Activated naive CD4-positive, alpha-beta T cell treated with anti-CD3 and anti-CD28 coated beads for 36 hours (primary cell): ENCODE measurements at regions of chr21 and their contacts with region 1.

Region 1: DNA sequence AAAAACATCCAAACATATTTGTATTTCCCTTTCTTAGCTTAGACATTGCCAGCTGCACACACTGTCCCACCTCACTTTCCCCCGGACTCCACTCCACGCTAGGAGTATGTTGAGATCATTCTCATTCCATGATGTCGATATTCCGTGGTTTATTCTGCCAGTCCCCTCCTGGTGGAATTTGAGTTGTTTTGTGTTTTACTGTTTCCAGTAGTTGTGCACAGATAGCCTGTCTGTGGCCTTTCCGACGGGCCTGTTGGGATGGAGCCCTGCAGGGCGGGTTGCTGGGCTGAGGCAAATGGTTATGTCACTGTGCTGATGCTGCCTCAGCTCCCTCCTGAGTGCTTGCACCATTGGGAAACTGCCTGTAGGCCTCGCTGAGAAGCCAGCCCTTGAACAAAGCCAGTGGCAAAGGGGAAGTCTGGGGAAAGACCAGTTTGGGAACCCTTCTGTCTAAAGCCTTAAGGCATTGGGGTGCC is 12.8 kb downstream of the TRAPPC10 start:
- DNase-seq: peak; percentile 35
- H3K4me3 Mint-ChIP-seq: no peak overlapping the region
- H3K27ac Mint-ChIP-seq: peak overlapping the region; percentile 81
- H3K4me1 Mint-ChIP-seq: peaks cover 81% of the 10 kb centered on the region
- H3K27me3 Mint-ChIP-seq: no peaks in the 10 kb centered on the region

Region 2: GRCh38 chr21:44083631-44084291 is 58.8 kb after region 1 on chr21:
- CTCF ChIA-PET with region 1: interaction called, 4 read pairs
- intact Hi-C with region 1: loop called (anchors 2 kb)
- DNase-seq: peak; percentile 83
- H3K4me3 Mint-ChIP-seq: peak overlapping the region; percentile 58
- H3K27ac Mint-ChIP-seq: peak overlapping the region; percentile 97
- H3K4me1 Mint-ChIP-seq: peaks cover 84% of the 10 kb centered on the region
- H3K27me3 Mint-ChIP-seq: no peaks in the 10 kb centered on the region

Region 3: GRCh38 chr21:44199465-44199864 is 174.5 kb after region 1 on chr21:
- CTCF ChIA-PET with region 1: no interaction called
- intact Hi-C with region 1: no loop called
- DNase-seq: no peak
- H3K4me3 Mint-ChIP-seq: no peak overlapping the region
- H3K27ac Mint-ChIP-seq: no peak overlapping the region
- H3K4me1 Mint-ChIP-seq: peaks cover 5% of the 10 kb centered on the region
- H3K27me3 Mint-ChIP-seq: no peaks in the 10 kb centered on the region